Heart right ventricle (tissue), 16 donors: ENCODE measurements at regions of chr5 and their contacts with region 1.

Region 1: GRCh38 chr5:134444941-134445471 is 33.3 kb upstream of the CDKN2AIPNL start:
- DNase-seq: no peak
- ATAC-seq: no peak
- H3K4me3 ChIP-seq: no peak overlapping the region
- H3K27ac ChIP-seq: no peak overlapping the region
- H3K4me1 ChIP-seq: peaks cover 0 to 1% (median 0%) of the 10 kb centered on the region in 9 donors
- H3K27me3 ChIP-seq: no peaks in the 10 kb centered on the region
- CTCF ChIP-seq: no peak

Region 2: GRCh38 chr5:134724872-134725271 is 279.9 kb after region 1 on chr5:
- intact Hi-C with region 1: loop called in 1 of 10 experiments (anchors 5 kb)
- DNase-seq: no peak
- ATAC-seq: no peak
- H3K4me3 ChIP-seq: no peak overlapping the region
- H3K27ac ChIP-seq: no peak overlapping the region
- H3K4me1 ChIP-seq: no peaks in the 10 kb centered on the region
- H3K27me3 ChIP-seq: no peaks in the 10 kb centered on the region
- CTCF ChIP-seq: no peak